ENCODE measurements at regions of chr1 and their contacts with region 1.

Region 1: DNA sequence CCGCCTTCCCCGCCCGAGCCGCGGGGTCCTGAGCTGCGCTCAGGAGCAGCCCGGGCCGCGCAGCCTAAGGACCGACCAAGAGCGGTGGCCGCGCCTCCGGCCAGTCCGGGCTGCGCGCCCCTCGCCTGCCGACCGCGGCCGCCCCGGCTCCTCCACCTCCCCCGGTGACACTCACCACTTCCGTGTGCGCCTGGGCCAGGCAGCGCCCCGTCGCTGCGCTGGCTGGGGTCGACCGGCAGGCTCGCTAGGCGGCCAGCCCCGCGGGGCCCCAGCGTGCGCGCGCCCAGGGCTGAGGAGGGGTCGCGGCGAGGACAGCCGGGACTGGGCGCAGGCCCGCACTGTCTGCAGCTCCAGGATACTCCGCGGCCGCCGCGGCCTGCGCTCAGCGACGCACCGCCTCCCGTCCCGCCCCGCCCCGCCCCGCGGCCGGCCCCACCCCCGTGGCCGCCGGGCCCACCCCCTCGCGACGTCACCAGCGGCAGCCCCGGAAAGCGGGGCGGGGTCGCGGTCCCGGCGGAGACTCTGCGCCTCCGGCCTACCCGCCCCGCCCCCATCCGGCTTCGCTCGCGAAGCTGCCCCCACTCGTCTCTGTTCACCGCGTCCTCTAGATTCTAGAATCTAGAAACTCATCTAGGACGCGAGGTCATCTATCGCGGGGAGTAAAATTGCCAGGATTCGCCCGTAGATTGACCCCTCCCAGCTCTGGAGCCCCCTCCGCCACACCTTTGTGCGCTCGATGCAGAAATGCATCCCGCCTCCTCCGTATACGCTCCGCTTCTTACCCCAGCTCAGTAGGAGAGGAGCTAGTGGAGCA is at the start of gene JAK1:
- DNase-seq: peak; percentile 98
- H3K4me3 ChIP-seq: peak within 1 kb of the TSS; percentile 67 to 92 (median 82)
- H3K27ac ChIP-seq: peak within 1 kb of the TSS; percentile 94 to 100 (median 98)
- H3K4me1 ChIP-seq: peaks cover 28 to 58% (median 46%) of the 10 kb centered on the region in 6 donors
- H3K27me3 ChIP-seq: no peaks in the 10 kb centered on the region
- CTCF ChIP-seq: peak in 5 of 11 experiments; percentile 2 to 49 (median 34)
- POLR2A ChIP-seq: peak in 2 of 3 donors; percentile 80 to 92
- total RNA-seq, gene JAK1: 199 to 270 (median 212) TPM

Region 2: DNA sequence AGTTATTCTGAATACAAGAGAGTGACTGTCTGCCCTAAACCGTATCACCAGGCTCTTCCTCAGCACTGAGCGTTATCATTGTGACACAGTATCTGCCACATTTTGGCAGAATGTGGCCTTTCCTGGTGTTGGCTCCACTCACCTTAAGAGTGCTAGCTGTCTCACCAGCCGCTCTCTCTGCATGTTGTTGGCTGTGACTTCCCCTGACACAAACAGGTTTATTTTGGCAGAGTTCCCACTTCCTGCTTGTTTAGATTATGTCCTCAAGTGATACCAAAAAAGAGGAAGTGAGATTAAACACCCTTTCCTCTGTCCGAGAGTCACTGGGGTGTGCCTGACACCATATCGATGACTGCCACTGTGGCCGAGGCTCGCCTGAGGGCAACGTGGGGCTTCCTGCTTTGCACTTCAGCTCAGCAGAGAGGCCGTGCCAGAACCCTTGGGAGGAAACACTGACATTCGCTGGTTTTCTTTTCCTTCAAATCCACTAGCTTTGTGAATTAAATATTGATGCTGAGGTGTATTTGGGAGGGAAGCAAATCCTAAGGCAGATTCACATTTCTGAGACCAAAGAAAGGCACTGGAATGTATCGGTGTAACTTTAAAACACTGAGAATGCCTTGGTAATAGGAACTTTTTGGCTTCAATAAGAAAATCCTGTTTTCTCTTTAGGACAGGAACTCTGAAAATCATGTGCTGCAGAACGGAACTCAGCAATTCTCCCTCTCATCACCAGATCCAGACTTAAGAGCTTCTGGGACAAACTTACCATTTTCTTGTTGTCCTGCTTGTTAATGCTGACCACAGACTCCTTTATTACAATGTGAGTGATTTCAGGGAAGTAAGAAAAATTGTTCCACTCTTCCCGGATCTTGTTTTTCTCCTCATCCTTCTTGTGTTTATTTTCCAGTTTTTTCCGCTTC is 102.1 kb before region 1 on chr1:
- intact Hi-C with region 1: loop called (anchors 10 kb)
- DNase-seq: peak; percentile 96
- H3K4me3 ChIP-seq: peak overlapping the region in 1 of 8 donors; percentile 43
- H3K27ac ChIP-seq: peak overlapping the region; percentile 53 to 85 (median 78)
- H3K4me1 ChIP-seq: peaks cover 32 to 72% (median 54%) of the 10 kb centered on the region in 6 donors
- H3K27me3 ChIP-seq: no peaks in the 10 kb centered on the region
- CTCF ChIP-seq: no peak
- POLR2A ChIP-seq: no peak

Region 3: GRCh38 chr1:64917328-64917861 is 49.0 kb before region 1 on chr1:
- intact Hi-C with region 1: loop called (anchors 10 kb)
- DNase-seq: no peak
- H3K4me3 ChIP-seq: no peak overlapping the region
- H3K27ac ChIP-seq: peak overlapping the region in 4 of 8 donors; percentile 9 to 50 (median 32)
- H3K4me1 ChIP-seq: peaks cover 47 to 89% (median 79%) of the 10 kb centered on the region in 6 donors
- H3K27me3 ChIP-seq: no peaks in the 10 kb centered on the region
- CTCF ChIP-seq: no peak
- POLR2A ChIP-seq: no peak

Measured in spleen (tissue), 13 donors.